Esophagus muscularis mucosa (tissue), 4 donors: ENCODE measurements at regions of chrX and their contacts with region 1.

Region 1: GRCh38 chrX:108537005-108537404 is 97.4 kb downstream of the COL4A5 start:
- DNase-seq: no peak
- H3K4me3 ChIP-seq: no peak overlapping the region
- H3K27ac ChIP-seq: peak overlapping the region in 1 of 4 donors; percentile 17
- H3K4me1 ChIP-seq: peaks cover 0 to 9% (median 0%) of the 10 kb centered on the region in 4 donors
- H3K27me3 ChIP-seq: no peaks in the 10 kb centered on the region
- CTCF ChIP-seq: peak; percentile 56 to 70 (median 65)
- EP300 ChIP-seq: no peak
- POLR2A ChIP-seq: no peak

Region 2: GRCh38 chrX:108224727-108225621 is 312.0 kb before region 1 on chrX:
- intact Hi-C with region 1: loop called (anchors 5 kb)
- DNase-seq: no peak
- H3K4me3 ChIP-seq: no peak overlapping the region
- H3K27ac ChIP-seq: peak overlapping the region; percentile 68 to 76 (median 75)
- H3K4me1 ChIP-seq: peaks cover 0 to 60% (median 47%) of the 10 kb centered on the region in 4 donors
- H3K27me3 ChIP-seq: no peaks in the 10 kb centered on the region
- CTCF ChIP-seq: peak; percentile 54 to 58 (median 55)
- EP300 ChIP-seq: no peak
- POLR2A ChIP-seq: no peak